MCF 10A (cell line): ENCODE measurements at regions of chr7 and their contacts with region 1.

Region 1: GRCh38 chr7:41977151-41977651 is 259.8 kb downstream of the GLI3 start:
- DNase-seq: peak; percentile 62
- H3K4me3 Mint-ChIP-seq: no peak overlapping the region
- H3K27ac Mint-ChIP-seq: no peak overlapping the region
- H3K4me1 Mint-ChIP-seq: peaks cover 44% of the 10 kb centered on the region
- H3K27me3 Mint-ChIP-seq: no peaks in the 10 kb centered on the region
- CTCF ChIP-seq: peak; percentile 75

Region 2: DNA sequence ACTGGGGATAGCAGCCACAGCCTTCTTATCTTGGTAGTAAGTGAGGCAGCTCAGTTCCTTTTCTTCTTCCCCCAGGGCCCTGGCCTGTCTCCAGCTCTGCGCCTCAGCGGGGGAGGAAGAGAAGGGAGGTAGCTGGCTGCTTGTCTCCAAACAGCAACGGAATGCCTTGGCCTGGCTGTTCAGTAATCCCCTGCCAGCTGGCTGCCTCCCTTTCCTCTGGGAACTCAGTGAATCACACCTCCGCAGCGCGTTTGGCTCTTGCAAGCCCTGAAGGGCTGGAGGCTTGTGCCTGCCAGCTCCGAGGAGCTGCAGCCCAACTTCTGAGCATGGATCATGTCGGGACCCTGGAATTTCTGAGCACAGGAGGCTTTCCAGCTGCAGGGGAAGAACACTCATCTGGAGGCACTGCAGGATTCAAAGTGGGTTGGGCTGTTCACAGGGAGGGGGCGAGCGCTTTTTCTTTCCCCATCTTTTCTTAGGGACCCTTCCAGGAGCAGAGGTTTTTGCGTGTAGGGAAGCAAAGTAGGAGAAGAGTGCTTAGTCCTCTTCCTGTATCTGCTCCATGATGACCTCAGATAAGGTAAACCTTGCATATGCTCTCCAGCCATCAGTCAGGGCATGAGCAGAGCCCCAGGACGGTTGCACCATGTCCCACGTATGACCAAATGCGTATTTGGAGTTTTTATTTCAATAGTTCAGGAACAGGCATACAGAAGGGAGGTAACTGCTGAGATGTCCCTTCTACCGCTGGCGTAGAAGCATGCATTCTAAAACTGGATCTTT is 21.1 kb before region 1 on chr7:
- CTCF ChIA-PET with region 1: interaction called, 14 read pairs
- POLR2A ChIA-PET with region 1: interaction called, 18 read pairs
- intact Hi-C with region 1: no loop called
- DNase-seq: peak; percentile 99
- H3K4me3 Mint-ChIP-seq: peak overlapping the region; percentile 53
- H3K27ac Mint-ChIP-seq: peak overlapping the region; percentile 37
- H3K4me1 Mint-ChIP-seq: peaks cover 33% of the 10 kb centered on the region
- H3K27me3 Mint-ChIP-seq: no peaks in the 10 kb centered on the region
- CTCF ChIP-seq: no peak

Region 3: GRCh38 chr7:41996381-41997035 is 19.3 kb after region 1 on chr7:
- CTCF ChIA-PET with region 1: interaction called, 69 read pairs
- POLR2A ChIA-PET with region 1: interaction called, 11 read pairs
- intact Hi-C with region 1: no loop called
- DNase-seq: peak; percentile 74
- H3K4me3 Mint-ChIP-seq: peak overlapping the region; percentile 60
- H3K27ac Mint-ChIP-seq: peak overlapping the region; percentile 74
- H3K4me1 Mint-ChIP-seq: peaks cover 48% of the 10 kb centered on the region
- H3K27me3 Mint-ChIP-seq: no peaks in the 10 kb centered on the region
- CTCF ChIP-seq: no peak

Region 4: GRCh38 chr7:42025635-42026375 is 48.6 kb after region 1 on chr7:
- CTCF ChIA-PET with region 1: interaction called, 18 read pairs
- POLR2A ChIA-PET with region 1: no interaction called
- intact Hi-C with region 1: no loop called
- DNase-seq: no peak
- H3K4me3 Mint-ChIP-seq: no peak overlapping the region
- H3K27ac Mint-ChIP-seq: no peak overlapping the region
- H3K4me1 Mint-ChIP-seq: no peaks in the 10 kb centered on the region
- H3K27me3 Mint-ChIP-seq: no peaks in the 10 kb centered on the region
- CTCF ChIP-seq: no peak

Region 5: GRCh38 chr7:42237162-42237821 is 260.1 kb after region 1 on chr7 and contains the start of gene GLI3:
- CTCF ChIA-PET with region 1: interaction called, 41 read pairs
- POLR2A ChIA-PET with region 1: interaction called, 5 read pairs
- intact Hi-C with region 1: loop called (anchors 2 kb)
- DNase-seq: peak; percentile 95
- H3K4me3 Mint-ChIP-seq: peak within 1 kb of the TSS; percentile 97
- H3K27ac Mint-ChIP-seq: peak within 1 kb of the TSS; percentile 96
- H3K4me1 Mint-ChIP-seq: peaks cover 45% of the 10 kb centered on the region
- H3K27me3 Mint-ChIP-seq: no peaks in the 10 kb centered on the region
- CTCF ChIP-seq: peak; percentile 12
- total RNA-seq, gene GLI3: 23.1 and 27.6 TPM in 2 replicates

Region 6: DNA sequence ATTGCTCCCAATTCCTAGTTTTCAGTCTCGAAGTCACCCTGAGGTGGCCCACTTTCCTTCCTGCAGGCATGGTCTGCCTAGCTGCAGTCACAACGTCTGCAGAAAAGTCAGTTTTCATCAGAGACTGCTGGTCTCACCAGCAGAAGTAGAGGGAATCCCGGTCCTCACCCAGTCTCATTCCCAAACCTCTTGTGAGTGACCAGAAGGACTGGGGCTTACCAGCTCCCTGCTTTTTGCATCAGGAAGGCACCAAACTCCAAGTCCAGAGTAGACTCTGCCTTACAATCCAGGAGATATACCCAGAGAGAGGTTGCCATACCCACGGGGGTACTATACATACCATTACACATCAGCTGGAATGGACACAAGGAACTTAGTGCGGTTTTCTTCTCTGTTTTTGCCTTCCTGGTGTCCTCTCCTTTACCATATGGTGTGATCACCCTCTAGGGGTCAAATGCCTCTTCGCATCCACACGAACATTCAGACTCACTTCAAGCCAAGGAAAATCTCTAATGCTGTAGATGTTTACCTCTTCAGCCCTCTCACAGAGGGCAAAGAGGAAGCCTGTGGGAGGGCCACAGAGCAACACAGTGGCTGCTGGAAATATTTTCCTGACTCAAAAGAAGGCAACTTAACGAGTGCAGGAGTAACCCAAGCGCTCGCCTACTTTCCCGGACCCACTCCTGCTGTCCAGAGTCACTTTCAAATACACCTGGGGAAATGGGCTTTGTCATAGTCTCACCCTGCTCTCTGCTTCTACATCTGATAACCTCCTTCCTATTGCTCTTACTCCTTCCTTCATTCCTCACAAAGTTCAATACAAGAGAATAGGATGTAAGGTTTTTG is 713.8 kb after region 1 on chr7:
- CTCF ChIA-PET with region 1: interaction called, 44 read pairs
- POLR2A ChIA-PET with region 1: interaction called, 3 read pairs
- intact Hi-C with region 1: loop called (anchors 1 kb)
- DNase-seq: peak; percentile 76
- H3K4me3 Mint-ChIP-seq: no peak overlapping the region
- H3K27ac Mint-ChIP-seq: peak overlapping the region; percentile 19
- H3K4me1 Mint-ChIP-seq: no peaks in the 10 kb centered on the region
- H3K27me3 Mint-ChIP-seq: no peaks in the 10 kb centered on the region
- CTCF ChIP-seq: peak; percentile 71

Region 7: DNA sequence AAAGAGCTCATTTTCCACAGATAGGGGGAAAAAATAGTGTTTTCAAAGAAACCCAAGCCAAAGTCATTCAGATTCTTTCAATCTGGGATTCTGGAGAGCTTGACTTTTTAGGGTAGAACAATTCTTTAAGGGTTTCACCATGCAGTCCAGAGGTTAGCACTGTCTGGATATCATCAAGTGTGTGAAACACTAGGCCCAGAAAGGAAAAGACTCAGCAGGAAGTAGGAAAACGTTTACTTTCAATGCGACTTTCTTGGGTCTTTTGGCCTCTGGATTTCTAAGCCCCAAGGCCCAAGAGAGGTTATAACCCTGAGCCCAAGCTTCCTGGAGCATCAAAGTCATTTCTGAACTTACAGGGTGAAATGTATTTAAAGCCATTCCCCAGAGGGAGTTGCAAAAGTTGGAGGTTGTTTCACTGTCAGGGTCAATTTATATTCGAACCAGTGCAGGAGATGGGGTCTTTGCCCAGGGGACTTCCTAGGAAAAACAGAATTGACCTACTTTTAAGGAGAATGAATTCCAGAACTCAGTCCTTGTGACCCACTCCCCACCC is 776.7 kb after region 1 on chr7:
- CTCF ChIA-PET with region 1: no interaction called
- POLR2A ChIA-PET with region 1: no interaction called
- intact Hi-C with region 1: no loop called
- DNase-seq: no peak
- H3K4me3 Mint-ChIP-seq: no peak overlapping the region
- H3K27ac Mint-ChIP-seq: no peak overlapping the region
- H3K4me1 Mint-ChIP-seq: no peaks in the 10 kb centered on the region
- H3K27me3 Mint-ChIP-seq: no peaks in the 10 kb centered on the region
- CTCF ChIP-seq: no peak

Region 8: DNA sequence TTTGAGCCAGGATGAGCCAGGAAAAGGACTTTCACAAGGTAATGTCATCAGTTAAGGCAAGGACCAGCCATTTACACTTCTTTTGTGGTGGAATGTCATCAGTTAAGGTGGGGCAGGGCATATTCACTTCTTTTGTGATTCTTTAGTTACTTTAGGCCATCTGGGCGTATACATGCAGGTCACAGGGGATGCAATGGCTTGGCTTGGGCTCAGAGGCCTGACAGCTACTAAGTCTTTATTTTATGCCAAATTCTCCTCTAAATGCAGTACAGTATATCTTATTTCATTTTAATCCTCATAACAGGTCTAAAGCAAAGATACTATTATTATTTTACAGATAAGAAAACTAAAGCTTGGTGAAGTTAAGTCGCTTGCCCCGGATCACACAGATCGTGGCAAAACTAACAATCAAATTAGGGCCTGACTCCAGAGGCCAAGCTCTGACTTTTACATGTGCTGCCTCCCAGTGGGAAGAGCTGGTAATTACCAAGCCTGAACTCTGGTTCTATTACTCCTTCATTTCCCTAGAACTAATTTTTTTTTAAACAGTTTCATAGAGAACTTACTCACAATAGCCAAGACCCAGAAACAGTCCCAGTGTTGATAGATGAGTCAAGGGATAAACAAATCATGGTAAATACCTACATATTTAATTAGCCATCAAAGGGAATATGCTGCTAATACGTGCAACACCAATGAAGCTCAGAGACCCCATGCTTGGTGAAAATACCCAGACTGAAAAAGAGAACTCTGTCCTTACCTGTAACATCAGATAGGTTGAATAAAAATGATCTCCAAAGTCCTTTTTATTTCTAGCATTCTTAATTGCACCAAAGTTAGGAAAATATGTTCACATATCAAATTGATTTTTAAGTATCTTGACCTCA is 899.2 kb after region 1 on chr7:
- CTCF ChIA-PET with region 1: interaction called, 13 read pairs
- POLR2A ChIA-PET with region 1: no interaction called
- intact Hi-C with region 1: no loop called
- DNase-seq: peak; percentile 79
- H3K4me3 Mint-ChIP-seq: no peak overlapping the region
- H3K27ac Mint-ChIP-seq: no peak overlapping the region
- H3K4me1 Mint-ChIP-seq: peaks cover 7% of the 10 kb centered on the region
- H3K27me3 Mint-ChIP-seq: no peaks in the 10 kb centered on the region
- CTCF ChIP-seq: peak; percentile 76